ENCODE measurements at regions of chr2 and their contacts with region 1.

Region 1: DNA sequence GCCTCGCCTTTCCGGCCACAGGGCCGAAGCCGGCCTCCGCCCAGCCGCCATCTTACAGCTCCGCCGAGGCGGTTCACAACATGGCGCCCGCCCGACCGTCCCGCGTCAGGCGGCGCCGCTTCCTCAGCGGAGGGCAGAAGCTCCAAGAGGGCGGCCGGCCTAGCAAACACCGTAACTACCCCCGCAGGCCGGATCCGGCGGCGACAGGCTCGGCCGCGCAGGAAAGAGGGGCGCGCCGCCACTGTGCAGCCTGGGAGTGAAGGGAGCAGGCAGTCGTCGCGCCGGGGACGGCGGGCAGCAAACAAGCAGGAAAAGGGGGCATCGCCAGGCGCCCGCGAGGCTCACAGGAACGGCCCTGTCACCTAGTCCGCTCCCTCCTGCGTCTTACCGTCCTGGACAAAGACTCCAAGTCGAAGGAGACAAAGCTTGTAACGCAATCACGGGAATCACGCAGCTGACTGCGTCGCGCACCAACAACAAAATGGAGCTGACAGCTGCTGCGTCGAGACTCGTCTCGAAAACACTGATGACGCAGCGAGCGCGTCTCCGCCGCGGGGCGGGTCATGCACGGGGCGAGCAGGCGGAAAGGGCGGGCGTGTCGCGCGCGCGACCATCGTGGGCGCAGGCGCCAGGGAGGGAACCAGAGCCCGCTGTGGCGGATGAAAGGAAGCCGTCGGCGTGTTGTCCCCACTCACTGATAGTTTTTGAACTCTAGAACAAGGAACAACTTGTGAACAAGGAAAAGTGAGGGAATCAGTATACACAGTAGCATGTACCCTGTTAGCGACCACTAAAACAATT is at the start of gene CLK1:
- DNase-seq: peak; percentile 79
- ATAC-seq: peak; percentile 90
- H3K4me3 ChIP-seq: peak within 1 kb of the TSS; percentile 90 to 96
- H3K27ac ChIP-seq: peak within 1 kb of the TSS; percentile 97
- H3K4me1 ChIP-seq: peaks cover 6 to 23% of the 10 kb centered on the region in 2 experiments; a peak in 3 of 4 replicates
- H3K27me3 ChIP-seq: no peaks in the 10 kb centered on the region
- CTCF ChIP-seq: no peak
- POLR2A ChIP-seq: peak; percentile 95
- RAD21 ChIP-seq: no peak
- total RNA-seq, gene CLK1: 49.1 TPM

Region 2: DNA sequence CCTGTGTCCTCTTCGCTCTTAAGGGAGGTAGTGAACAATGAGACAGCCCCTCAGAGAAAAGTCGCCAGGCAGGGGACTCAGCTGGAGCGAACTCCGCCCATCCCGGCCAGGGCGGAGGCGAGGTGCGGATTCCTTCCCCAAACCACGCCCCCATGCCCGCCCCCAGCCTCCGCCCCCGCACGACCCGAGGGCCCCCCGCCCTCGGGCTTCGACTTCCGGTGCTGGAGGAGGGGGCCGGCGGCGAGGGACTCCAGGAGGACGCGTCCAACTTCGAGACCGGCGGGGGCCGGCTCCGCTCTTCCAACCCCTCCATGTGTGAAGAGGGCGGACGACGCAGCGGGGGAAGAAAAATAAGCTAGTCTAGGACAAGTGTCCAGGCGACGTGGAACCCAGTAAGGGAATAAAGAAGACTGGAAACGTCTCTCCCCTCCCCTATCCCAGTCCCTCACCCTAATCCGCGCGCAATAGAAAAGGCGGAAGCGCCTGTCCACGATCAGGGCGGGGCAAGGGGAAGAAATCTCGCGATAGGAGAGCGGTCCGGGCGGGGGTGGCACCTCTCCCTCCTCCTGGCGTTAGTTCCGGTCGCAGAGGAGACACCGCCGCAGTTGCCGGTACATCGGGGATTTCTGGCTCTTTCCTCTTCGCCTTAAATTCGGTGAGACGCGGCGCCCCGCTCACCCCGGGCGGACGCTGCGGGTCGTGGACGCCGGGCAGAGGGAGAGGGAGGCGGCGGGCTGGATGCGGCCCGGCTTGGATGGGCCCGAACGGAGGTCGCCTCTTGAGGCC is 52.8 kb before region 1 on chr2 and contains the start of gene BZW1:
- CTCF ChIA-PET with region 1: no interaction called
- POLR2A ChIA-PET with region 1: interaction called, 3 read pairs
- RAD21 ChIA-PET with region 1: no interaction called
- intact Hi-C with region 1: loop called (anchors 5 kb)
- DNase-seq: peak; percentile 92
- ATAC-seq: peak; percentile 90
- H3K4me3 ChIP-seq: peak within 1 kb of the TSS; percentile 66 to 85
- H3K27ac ChIP-seq: peak within 1 kb of the TSS; percentile 96
- H3K4me1 ChIP-seq: peaks cover 12 to 26% of the 10 kb centered on the region in 2 experiments
- H3K27me3 ChIP-seq: no peaks in the 10 kb centered on the region
- CTCF ChIP-seq: no peak
- POLR2A ChIP-seq: peak; percentile 74
- RAD21 ChIP-seq: 0 out of 2 replicates have a peak, but pooled peaks have one; percentile 4
- total RNA-seq, gene BZW1: 454 TPM

Region 3: DNA sequence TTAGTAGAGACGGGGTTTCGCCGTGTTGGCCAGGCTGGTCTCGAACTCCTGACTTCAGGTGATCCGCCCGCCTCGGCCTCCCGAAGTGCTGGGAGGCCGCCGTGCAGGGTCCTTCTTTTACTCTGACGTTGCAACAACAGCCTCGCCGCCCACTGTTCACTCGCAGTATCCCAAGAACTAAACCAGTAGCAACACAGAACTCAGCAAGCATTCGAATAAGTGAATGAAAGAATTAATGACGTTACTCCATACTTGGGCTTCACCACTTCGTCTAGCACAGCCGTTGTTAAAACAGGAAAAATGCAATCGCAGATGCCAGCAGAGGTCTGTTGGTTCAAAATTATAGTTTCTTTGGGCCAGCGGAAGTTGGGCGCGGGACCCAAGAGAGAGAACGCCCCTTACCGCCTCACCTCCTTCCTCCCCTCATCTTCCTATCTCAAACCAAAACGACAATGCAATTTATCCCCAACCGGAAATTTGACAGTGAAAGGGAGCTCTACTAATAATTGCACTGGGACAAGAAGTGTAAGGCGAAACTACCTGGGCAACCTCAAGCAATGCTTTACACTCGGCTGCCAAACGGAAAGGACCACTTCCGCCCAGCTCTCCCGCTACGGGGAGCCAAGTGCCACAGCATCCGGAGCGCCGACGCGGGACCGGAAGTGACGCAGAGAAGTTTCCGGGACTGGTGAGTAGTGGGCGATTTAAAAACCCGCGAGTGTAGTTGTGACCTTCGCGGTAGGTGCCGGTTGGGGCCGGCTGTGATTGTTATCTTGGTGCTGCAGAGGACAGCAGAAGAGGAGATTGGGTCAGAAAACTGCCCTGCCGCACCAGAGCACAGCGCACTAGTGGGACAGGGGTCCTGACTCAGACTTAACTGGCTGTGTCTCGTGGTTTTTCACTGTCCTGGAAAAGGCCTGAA is 24.6 kb after region 1 on chr2 and contains the starts of genes NIF3L1 and PPIL3:
- CTCF ChIA-PET with region 1: no interaction called
- POLR2A ChIA-PET with region 1: interaction called, 19 read pairs
- RAD21 ChIA-PET with region 1: no interaction called
- intact Hi-C with region 1: loop called (anchors 2 kb)
- DNase-seq: peak; percentile 99
- ATAC-seq: peak; percentile 85
- H3K4me3 ChIP-seq: peak within 1 kb of the TSS; percentile 63 to 73
- H3K27ac ChIP-seq: peak within 1 kb of the TSS; percentile 94
- H3K4me1 ChIP-seq: peaks cover 0 to 16% of the 10 kb centered on the region in 2 experiments; a peak in 3 of 4 replicates
- H3K27me3 ChIP-seq: no peaks in the 10 kb centered on the region
- CTCF ChIP-seq: no peak
- POLR2A ChIP-seq: peak; percentile 36
- RAD21 ChIP-seq: no peak; the same call in 1 of the 2 replicates
- total RNA-seq, gene NIF3L1: 44.7 TPM
- total RNA-seq, gene PPIL3: 55.9 TPM

Region 4: GRCh38 chr2:201109186-201109585 is 244.8 kb after region 1 on chr2:
- CTCF ChIA-PET with region 1: no interaction called
- POLR2A ChIA-PET with region 1: no interaction called
- RAD21 ChIA-PET with region 1: no interaction called
- intact Hi-C with region 1: no loop called
- DNase-seq: no peak
- ATAC-seq: no peak
- H3K4me3 ChIP-seq: no peak overlapping the region
- H3K27ac ChIP-seq: no peak overlapping the region
- H3K4me1 ChIP-seq: no peaks in the 10 kb centered on the region
- H3K27me3 ChIP-seq: no peaks in the 10 kb centered on the region
- CTCF ChIP-seq: no peak
- POLR2A ChIP-seq: no peak
- RAD21 ChIP-seq: no peak

Measured in HCT116 (cell line).